H1 (cell line): ENCODE measurements at regions of chr5 and their contacts with region 1.

Region 1: DNA sequence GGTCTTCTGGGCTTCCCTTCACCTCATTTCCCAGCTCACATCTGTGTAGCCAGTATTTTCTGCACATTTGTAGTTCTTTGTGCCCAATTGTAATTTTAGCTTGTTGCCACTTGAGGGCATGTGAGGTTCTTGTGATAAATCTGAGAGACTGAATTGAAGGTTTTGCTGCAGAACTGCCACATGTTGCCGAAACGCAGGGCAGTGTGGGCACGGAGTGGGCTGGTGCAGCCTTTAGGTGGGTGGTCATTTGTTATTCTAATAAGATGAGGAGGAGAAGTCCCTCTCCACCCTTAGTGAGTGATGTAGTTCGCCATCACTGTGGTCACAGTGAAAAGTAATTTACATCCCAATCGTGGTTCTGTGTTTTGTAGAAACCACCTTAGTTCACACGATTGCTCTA is 21.2 kb downstream of the OTULIN start:
- DNase-seq: no peak
- H3K4me3 ChIP-seq: no peak overlapping the region
- H3K27ac ChIP-seq: no peak overlapping the region
- H3K4me1 ChIP-seq: no peaks in the 10 kb centered on the region
- H3K27me3 ChIP-seq: no peaks in the 10 kb centered on the region
- CTCF ChIP-seq: peak in 2 of 3 experiments; percentile 73 to 74; a peak in 3 of 4 replicates
- EP300 ChIP-seq: no peak
- POLR2A ChIP-seq: no peak
- RAD21 ChIP-seq: peak; percentile 81 to 89

Region 2: GRCh38 chr5:14700478-14701436 is 15.0 kb after region 1 on chr5:
- CTCF ChIA-PET with region 1: interaction called, 13 read pairs
- POLR2A ChIA-PET with region 1: interaction called, 3 read pairs
- DNase-seq: no peak
- H3K4me3 ChIP-seq: no peak overlapping the region
- H3K27ac ChIP-seq: no peak overlapping the region
- H3K4me1 ChIP-seq: peaks cover 0 to under 1% (median 0%) of the 10 kb centered on the region in 4 experiments; a peak in 1 of 7 replicates
- H3K27me3 ChIP-seq: peaks cover 0 to 3% (median 0%) of the 10 kb centered on the region in 4 experiments; a peak in 1 of 7 replicates
- CTCF ChIP-seq: no peak
- EP300 ChIP-seq: no peak
- POLR2A ChIP-seq: no peak
- RAD21 ChIP-seq: no peak

Region 3: DNA sequence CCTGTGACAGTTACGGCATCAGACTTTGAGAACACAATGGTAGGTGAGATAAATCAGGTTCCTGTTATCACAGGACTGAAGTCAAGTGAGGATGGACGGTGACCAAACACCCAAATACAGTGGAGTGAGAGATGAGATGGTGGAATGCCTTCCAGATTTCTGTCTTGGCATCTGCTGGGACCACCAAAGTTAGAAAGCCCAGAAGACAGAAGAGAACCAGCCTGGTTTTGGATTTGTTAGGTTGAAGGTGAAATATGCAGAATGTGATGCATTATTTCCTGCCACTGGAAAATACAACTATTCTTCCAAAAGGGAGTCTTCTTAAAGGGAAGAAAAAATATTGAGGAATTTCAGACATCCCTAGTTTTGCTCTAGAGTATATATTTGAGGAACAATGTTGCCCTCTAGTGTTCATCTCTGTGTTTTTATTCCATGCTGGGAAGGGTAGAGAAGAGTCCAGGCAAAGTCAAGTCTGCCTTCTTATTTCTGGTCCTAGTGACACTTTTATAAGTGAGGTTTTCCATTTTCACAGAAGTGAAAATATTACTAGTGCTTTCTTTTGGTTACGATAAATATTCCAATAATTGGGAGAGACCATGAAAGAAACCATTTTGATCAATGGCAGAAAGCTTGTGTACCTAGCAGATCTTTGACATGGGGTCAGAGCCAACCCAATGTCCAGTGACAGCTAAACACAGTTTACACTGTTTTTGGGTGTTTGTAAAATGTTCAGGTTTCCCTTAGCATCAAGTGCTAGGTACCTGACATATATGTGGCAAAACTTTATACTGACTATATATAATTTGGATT is 328.1 kb after region 1 on chr5:
- CTCF ChIA-PET with region 1: interaction called, 20 read pairs
- POLR2A ChIA-PET with region 1: interaction called, 4 read pairs
- DNase-seq: no peak
- H3K4me3 ChIP-seq: no peak overlapping the region
- H3K27ac ChIP-seq: no peak overlapping the region
- H3K4me1 ChIP-seq: peaks cover 0 to 2% (median 0%) of the 10 kb centered on the region in 4 experiments; a peak in 2 of 7 replicates
- H3K27me3 ChIP-seq: no peaks in the 10 kb centered on the region
- CTCF ChIP-seq: peak in 2 of 3 experiments; percentile 35 to 63; a peak in 2 of 4 replicates
- EP300 ChIP-seq: no peak
- POLR2A ChIP-seq: no peak
- RAD21 ChIP-seq: peak; percentile 74 to 78